OCI-LY7 (cell line): ENCODE measurements at regions of chr1 and their contacts with region 1.

Region 1: DNA sequence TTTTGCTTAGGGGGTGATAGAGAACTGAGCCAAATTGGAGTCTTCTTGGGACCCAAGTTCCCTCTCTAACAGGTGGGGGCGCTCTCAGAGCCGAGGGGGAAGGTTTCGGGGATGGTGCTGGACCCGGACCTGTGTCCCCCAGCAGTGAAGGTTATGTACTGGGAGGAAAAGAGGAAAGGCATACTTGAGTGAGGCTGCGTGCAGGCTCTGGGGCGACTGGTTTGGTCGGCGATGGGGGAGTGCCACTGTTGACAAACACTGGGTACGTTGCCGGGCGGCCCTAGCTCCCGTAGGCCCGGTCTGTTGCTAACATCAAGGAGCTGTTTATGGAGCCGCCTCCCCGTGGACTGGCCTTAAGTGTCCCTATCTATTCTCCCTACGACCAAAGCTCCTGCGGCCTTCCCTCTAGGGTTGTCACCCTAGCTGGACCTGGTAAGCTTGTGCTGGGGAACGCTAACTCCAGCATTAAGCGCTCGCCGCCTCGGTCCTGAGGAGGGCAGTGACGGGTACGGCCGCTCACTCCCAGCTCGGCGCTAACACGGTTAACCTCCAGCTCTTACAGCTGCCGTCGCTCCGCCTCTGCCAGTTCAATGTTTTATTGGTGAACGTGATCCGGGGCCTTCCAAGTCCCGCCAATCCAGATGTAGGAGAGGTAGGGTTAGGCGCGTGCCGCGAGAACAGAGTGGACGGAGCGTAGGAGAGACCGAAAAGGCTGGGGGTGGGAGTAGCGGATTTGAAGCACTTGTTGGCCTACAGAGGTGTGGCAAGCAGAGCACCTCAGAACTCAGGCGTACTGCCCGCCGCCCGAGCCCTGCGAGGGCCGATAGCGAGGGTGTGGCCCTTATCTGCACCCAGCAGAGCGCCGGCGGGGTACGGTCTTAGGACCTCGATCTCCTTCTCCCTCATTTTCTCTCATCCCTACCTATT is at the start of gene PPOX:
- DNase-seq: peak; percentile 97
- H3K4me3 ChIP-seq: peak within 1 kb of the TSS; percentile 79
- H3K27ac ChIP-seq: peak within 1 kb of the TSS; percentile 57
- H3K4me1 ChIP-seq: peaks cover 14% of the 10 kb centered on the region
- CTCF ChIP-seq: peak; percentile 87
- total RNA-seq, gene PPOX: 40.1 and 42.0 TPM in 2 replicates

Region 2: DNA sequence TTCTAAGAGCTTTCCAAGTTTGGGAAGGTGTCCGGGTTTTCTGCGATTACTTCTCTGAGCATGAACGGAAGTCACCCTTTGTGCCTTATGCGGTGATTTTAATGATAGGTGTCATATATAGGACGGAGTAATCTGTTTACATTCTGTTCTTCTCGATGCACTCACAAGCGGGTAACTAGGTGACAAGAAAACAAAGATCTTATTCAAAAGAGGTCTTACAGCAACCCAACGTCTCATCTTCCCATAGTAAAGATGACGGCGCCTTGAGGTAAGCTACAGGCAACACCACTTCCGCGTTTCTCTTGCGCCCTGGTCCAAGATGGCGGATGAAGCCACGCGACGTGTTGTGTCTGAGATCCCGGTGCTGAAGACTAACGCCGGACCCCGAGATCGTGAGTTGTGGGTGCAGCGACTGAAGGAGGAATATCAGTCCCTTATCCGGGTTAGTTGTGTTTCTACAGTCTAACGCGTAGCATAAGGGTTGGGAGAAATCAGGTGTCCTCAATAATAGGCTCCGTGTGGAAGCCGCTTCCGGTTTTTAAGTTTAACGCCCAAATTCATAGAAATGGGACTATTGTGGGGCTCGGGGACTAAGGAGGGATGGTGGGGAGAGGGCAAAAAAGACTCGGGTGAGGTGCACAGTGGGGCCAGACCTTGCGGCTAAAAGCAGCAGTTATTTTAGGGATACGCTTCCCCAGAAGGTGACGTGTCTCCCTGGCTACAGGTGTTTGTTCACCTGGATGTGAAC is 12.2 kb before region 1 on chr1 and contains the start of gene UFC1:
- CTCF ChIA-PET with region 1: interaction called, 6 read pairs
- POLR2A ChIA-PET with region 1: interaction called, 18 read pairs
- intact Hi-C with region 1: no loop called
- DNase-seq: peak; percentile 95
- H3K4me3 ChIP-seq: peak within 1 kb of the TSS; percentile 73
- H3K27ac ChIP-seq: peak within 1 kb of the TSS; percentile 79
- H3K4me1 ChIP-seq: peaks cover 21% of the 10 kb centered on the region
- CTCF ChIP-seq: no peak
- total RNA-seq, gene UFC1: 61.2 and 87.7 TPM in 2 replicates

Region 3: GRCh38 chr1:161177112-161177935 is 11.3 kb after region 1 on chr1 and contains the start of gene B4GALT3:
- CTCF ChIA-PET with region 1: interaction called, 10 read pairs
- POLR2A ChIA-PET with region 1: interaction called, 23 read pairs
- intact Hi-C with region 1: loop called (anchors 1 kb)
- DNase-seq: peak; percentile 87
- H3K4me3 ChIP-seq: peak within 1 kb of the TSS; percentile 86
- H3K27ac ChIP-seq: peak within 1 kb of the TSS; percentile 60
- H3K4me1 ChIP-seq: peaks cover 33% of the 10 kb centered on the region
- CTCF ChIP-seq: peak; percentile 40; the same call in 1 of the 2 replicates
- total RNA-seq, gene B4GALT3: 36.2 and 39.1 TPM in 2 replicates